Calu3 (cell line): ENCODE measurements at regions of chr3 and their contacts with region 1.

Region 1: GRCh38 chr3:150061288-150062024 is 90.8 kb upstream of the PFN2 start:
- DNase-seq: no peak
- H3K4me3 Mint-ChIP-seq: no peak overlapping the region
- H3K27ac Mint-ChIP-seq: no peak overlapping the region
- H3K4me1 Mint-ChIP-seq: no peaks in the 10 kb centered on the region
- H3K27me3 Mint-ChIP-seq: peaks cover 75% of the 10 kb centered on the region
- CTCF ChIP-seq: no peak

Region 2: DNA sequence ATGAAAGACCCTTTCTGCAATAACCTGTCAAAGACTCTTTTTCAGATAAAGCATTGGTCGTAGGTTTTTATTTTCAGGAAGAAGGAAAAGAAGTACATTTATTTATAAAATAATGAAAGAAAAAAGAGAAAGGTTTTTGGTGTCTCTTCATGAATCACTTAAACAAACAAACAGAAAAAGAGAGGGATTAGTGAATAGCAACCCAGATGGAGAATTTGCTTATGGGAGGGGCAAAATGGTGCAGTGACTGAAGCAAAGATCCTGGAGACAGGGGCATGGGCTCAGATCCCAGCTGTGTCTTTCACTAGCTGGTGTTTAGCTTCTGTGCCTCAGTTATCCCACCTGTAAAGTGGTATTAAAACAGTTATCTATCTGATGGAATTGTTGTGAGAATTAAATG is 12.1 kb before region 1 on chr3:
- CTCF ChIA-PET with region 1: no interaction called
- intact Hi-C with region 1: loop called (anchors 1 kb)
- DNase-seq: no peak
- H3K4me3 Mint-ChIP-seq: no peak overlapping the region
- H3K27ac Mint-ChIP-seq: no peak overlapping the region
- H3K4me1 Mint-ChIP-seq: no peaks in the 10 kb centered on the region
- H3K27me3 Mint-ChIP-seq: peaks cover 61% of the 10 kb centered on the region
- CTCF ChIP-seq: no peak